WTC11 (cell line): ENCODE measurements at regions of chr1 and their contacts with region 1.

Region 1: DNA sequence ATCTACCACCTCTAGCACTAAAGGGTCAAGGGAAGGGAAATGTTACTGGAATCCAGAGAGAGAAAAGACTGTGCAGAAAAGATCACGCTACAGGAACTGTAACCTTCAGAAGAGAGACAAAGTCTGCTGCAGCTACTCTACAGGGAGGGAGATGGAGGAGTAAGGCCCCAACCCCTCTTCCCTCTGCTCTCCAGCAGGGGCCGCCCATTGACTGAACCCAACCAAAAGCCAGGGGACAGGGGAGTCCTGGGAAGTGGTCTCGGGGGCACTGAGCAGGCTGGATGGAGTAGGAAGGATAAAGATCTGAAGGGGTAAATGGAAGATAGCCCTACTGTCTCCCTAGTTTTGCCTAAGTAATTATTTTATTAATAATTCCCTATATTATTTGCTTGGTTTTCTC is 72.8 kb upstream of the NR5A2 start:
- DNase-seq: peak; percentile 83
- ATAC-seq: peak; percentile 100
- H3K4me3 Mint-ChIP-seq: no peak overlapping the region
- H3K27ac Mint-ChIP-seq: no peak overlapping the region
- H3K4me1 Mint-ChIP-seq: peaks cover 21% of the 10 kb centered on the region
- H3K27me3 Mint-ChIP-seq: no peaks in the 10 kb centered on the region
- CTCF ChIP-seq: peak; percentile 51

Region 2: DNA sequence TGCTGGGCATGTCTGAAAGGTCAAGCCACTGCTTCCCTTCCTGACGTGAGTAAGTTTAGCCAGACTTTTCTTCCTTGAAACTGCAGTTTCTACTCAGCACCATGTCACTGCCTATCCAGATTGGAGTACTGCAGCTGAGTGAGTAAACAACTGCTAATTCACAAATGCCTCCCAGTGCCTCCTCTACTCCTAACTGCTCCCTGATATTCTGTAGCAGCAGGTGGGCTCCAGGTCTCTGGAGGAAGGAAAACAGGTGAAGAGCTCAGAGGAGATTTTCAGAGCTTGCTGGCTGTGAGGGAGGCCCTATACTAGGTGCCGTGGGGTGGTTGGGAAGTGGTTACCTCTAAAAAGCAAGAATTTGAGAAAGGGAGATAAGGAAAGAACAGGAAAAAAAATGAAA is 569.4 kb after region 1 on chr1:
- CTCF ChIA-PET with region 1: no interaction called
- POLR2A ChIA-PET with region 1: interaction called, 14 read pairs
- DNase-seq: peak; percentile 19
- ATAC-seq: peak; percentile 81
- H3K4me3 Mint-ChIP-seq: no peak overlapping the region
- H3K27ac Mint-ChIP-seq: peak overlapping the region; percentile 29; the same call in 1 of the 2 replicates
- H3K4me1 Mint-ChIP-seq: peaks cover 6% of the 10 kb centered on the region
- H3K27me3 Mint-ChIP-seq: no peaks in the 10 kb centered on the region
- CTCF ChIP-seq: no peak